Mammary epithelial cell (primary cell): ENCODE measurements at regions of chr16 and their contacts with region 1.

Region 1: GRCh38 chr16:3188925-3189825 is 1.2 kb downstream of the OR1F1 start:
- DNase-seq: peak; percentile 76
- H3K4me3 ChIP-seq: peak overlapping the region; percentile 57 to 62 (median 60)
- H3K27ac ChIP-seq: no peak overlapping the region
- H3K4me1 ChIP-seq: peaks cover 8% of the 10 kb centered on the region
- H3K27me3 ChIP-seq: no peaks in the 10 kb centered on the region
- CTCF ChIP-seq: no peak

Region 2: GRCh38 chr16:3158471-3159314 is 30.5 kb before region 1 on chr16:
- CTCF ChIA-PET with region 1: no interaction called
- dilution Hi-C with region 1: no loop called
- in situ Hi-C with region 1: no loop called
- intact Hi-C with region 1: loop called (anchors 1 kb)
- DNase-seq: peak; percentile 93
- H3K4me3 ChIP-seq: peak overlapping the region; percentile 79 to 90 (median 83)
- H3K27ac ChIP-seq: peak overlapping the region; percentile 91
- H3K4me1 ChIP-seq: peaks cover 11% of the 10 kb centered on the region
- H3K27me3 ChIP-seq: no peaks in the 10 kb centered on the region
- CTCF ChIP-seq: no peak

Region 3: GRCh38 chr16:3234543-3235541 is 45.7 kb after region 1 on chr16 and contains the start of gene ZNF200:
- CTCF ChIA-PET with region 1: no interaction called
- dilution Hi-C with region 1: no loop called
- in situ Hi-C with region 1: no loop called
- intact Hi-C with region 1: loop called (anchors 2 kb)
- DNase-seq: peak; percentile 95
- H3K4me3 ChIP-seq: peak within 1 kb of the TSS; percentile 81 to 90 (median 82)
- H3K27ac ChIP-seq: peak within 1 kb of the TSS; percentile 62
- H3K4me1 ChIP-seq: peaks cover 4% of the 10 kb centered on the region
- H3K27me3 ChIP-seq: no peaks in the 10 kb centered on the region
- CTCF ChIP-seq: no peak
- total RNA-seq, gene ZNF200: 10.0 to 10.5 TPM

Region 4: DNA sequence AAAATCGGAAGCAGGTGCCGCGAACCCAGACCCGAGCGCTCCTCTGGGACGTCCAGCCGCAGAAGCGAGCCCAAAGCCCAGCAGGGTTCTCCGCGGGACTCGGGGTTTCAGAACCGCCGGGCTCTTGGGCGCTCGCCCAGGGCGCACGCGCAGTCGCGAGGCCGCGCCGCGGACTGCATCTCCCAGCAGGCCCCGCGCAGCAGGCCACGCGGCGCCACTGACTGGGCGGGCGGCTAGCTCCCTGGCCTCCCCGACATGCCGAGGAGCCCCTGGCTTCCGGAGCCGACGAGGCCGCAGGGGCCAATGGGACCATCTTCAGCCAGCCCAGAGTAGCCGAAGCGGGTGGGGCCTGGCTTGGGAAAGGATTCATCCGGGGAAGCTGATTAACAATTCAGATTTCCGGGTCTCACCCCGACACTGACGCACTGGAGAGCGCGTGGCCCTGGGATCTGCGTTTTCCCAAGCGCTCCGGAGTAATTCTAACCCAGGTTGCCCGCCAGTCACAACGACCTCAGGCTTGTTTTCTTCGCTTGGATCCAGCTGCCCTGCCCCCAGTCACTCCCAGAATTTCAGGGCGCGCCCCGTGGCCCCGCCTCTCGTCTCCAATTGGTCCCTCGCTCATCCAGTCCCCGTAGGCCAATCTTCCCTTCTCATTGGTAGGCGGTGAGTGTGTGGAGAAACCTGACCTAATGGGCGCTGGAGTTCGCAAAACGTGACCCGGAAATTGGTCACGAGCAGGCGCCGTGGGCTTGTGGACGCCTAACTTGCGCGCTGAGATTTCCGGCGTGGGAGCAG is 93.8 kb after region 1 on chr16 and contains the start of gene ZNF263:
- CTCF ChIA-PET with region 1: no interaction called
- dilution Hi-C with region 1: no loop called
- in situ Hi-C with region 1: no loop called
- intact Hi-C with region 1: loop called (anchors 2 kb)
- DNase-seq: peak; percentile 98
- H3K4me3 ChIP-seq: peak within 1 kb of the TSS; percentile 86 to 98 (median 91)
- H3K27ac ChIP-seq: peak within 1 kb of the TSS; percentile 96
- H3K4me1 ChIP-seq: peaks cover 12% of the 10 kb centered on the region
- H3K27me3 ChIP-seq: no peaks in the 10 kb centered on the region
- CTCF ChIP-seq: no peak
- total RNA-seq, gene ZNF263: 23.7 to 54.8 TPM

Region 5: DNA sequence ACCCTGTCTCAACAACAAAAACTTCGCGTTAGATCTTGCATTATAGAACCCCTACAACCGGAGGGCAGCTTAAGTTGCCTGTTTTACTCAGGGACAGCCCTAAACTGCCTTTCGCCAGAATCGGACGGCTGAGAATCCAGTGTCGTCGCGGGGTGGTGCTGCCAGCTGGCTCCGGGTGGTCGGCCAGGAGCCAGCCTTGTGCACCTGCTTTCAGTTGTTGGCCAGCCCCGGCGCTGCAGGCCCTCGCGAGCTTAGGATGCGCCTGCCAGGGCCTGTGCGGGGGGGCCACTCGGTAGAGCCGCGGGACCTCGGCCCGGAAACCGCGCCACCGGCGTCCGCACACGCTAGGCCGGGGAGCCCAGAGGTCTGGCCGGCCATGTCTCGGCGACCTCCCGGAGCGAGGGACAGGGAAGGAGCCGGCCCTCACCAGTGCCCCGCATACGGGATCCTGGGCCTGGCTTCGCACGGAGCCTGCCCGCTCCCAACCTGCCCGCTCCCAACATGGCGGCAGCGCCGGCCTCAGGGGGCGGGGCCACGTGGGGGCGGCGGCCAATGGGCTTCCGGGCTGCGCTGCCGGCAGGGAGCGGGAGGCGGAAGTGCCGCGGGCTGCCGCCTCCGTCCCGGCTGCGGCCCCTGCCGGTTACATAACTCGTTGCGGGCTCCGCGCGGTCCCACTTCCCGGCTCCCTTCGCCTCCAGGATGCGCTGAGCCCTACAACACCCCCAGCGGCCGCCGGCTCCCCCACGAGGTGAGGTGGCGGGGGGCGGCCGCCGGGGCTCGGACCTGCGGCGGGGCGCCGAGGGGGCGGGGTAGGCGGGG is 268.5 kb after region 1 on chr16:
- CTCF ChIA-PET with region 1: no interaction called
- dilution Hi-C with region 1: no loop called
- in situ Hi-C with region 1: no loop called
- intact Hi-C with region 1: loop called (anchors 2 kb)
- DNase-seq: peak; percentile 89
- H3K4me3 ChIP-seq: peak overlapping the region; percentile 88 to 97 (median 95)
- H3K27ac ChIP-seq: peak overlapping the region; percentile 84
- H3K4me1 ChIP-seq: peaks cover 11% of the 10 kb centered on the region
- H3K27me3 ChIP-seq: no peaks in the 10 kb centered on the region
- CTCF ChIP-seq: peak in 1 of 2 donors; percentile 54